ENCODE measurements at regions of chr9 and their contacts with region 1.

Region 1: GRCh38 chr9:32278991-32279390 is 105.5 kb upstream of the ACO1 start:
- DNase-seq: no peak
- ATAC-seq: no peak
- H3K4me3 Mint-ChIP-seq: no peak overlapping the region
- H3K27ac Mint-ChIP-seq: no peak overlapping the region
- H3K4me1 Mint-ChIP-seq: no peaks in the 10 kb centered on the region
- H3K27me3 Mint-ChIP-seq: no peaks in the 10 kb centered on the region

Region 2: GRCh38 chr9:31715250-31715649 is 563.7 kb before region 1 on chr9:
- CTCF ChIA-PET with region 1: no interaction called
- POLR2A ChIA-PET with region 1: no interaction called
- intact Hi-C with region 1: loop called in 1 of 2 experiments (anchors 10 kb)
- DNase-seq: no peak
- ATAC-seq: no peak
- H3K4me3 Mint-ChIP-seq: no peak overlapping the region
- H3K27ac Mint-ChIP-seq: no peak overlapping the region
- H3K4me1 Mint-ChIP-seq: no peaks in the 10 kb centered on the region
- H3K27me3 Mint-ChIP-seq: no peaks in the 10 kb centered on the region

Region 3: DNA sequence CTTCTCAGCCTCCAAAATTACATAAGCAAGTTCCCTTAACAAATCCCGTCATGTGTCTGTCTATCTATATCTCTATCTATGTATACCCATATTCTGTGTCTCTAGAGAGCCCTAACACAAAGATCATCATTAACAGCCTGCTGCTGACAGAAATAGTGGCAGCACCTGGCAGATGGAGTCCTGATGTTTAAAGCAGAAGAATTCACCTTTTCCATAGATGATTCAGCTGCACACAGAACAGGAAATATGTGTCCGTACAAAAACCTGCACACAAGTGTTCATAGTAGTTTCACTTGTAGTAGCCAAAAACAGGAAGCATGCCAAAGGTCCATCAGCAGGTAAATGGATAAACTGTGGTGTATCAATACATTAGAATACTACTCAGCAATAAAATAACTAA is 60.4 kb after region 1 on chr9:
- CTCF ChIA-PET with region 1: no interaction called
- POLR2A ChIA-PET with region 1: no interaction called
- intact Hi-C with region 1: loop called in 1 of 2 experiments (anchors 10 kb)
- DNase-seq: no peak
- ATAC-seq: no peak
- H3K4me3 Mint-ChIP-seq: no peak overlapping the region
- H3K27ac Mint-ChIP-seq: no peak overlapping the region
- H3K4me1 Mint-ChIP-seq: peaks cover 3% of the 10 kb centered on the region
- H3K27me3 Mint-ChIP-seq: peaks cover 9% of the 10 kb centered on the region

Region 4: GRCh38 chr9:32978051-32978450 is 699.1 kb after region 1 on chr9:
- CTCF ChIA-PET with region 1: no interaction called
- POLR2A ChIA-PET with region 1: no interaction called
- intact Hi-C with region 1: no loop called
- DNase-seq: no peak
- ATAC-seq: no peak
- H3K4me3 Mint-ChIP-seq: no peak overlapping the region
- H3K27ac Mint-ChIP-seq: no peak overlapping the region
- H3K4me1 Mint-ChIP-seq: no peaks in the 10 kb centered on the region
- H3K27me3 Mint-ChIP-seq: no peaks in the 10 kb centered on the region

Measured in activated CD4-positive, alpha-beta T cell treated with anti-CD3 and anti-CD28 coated beads for 36 hours (primary cell).